Activated CD4-positive, alpha-beta T cell treated with anti-CD3 and anti-CD28 coated beads for 36 hours (primary cell): ENCODE measurements at regions of chr18 and their contacts with region 1.

Region 1: DNA sequence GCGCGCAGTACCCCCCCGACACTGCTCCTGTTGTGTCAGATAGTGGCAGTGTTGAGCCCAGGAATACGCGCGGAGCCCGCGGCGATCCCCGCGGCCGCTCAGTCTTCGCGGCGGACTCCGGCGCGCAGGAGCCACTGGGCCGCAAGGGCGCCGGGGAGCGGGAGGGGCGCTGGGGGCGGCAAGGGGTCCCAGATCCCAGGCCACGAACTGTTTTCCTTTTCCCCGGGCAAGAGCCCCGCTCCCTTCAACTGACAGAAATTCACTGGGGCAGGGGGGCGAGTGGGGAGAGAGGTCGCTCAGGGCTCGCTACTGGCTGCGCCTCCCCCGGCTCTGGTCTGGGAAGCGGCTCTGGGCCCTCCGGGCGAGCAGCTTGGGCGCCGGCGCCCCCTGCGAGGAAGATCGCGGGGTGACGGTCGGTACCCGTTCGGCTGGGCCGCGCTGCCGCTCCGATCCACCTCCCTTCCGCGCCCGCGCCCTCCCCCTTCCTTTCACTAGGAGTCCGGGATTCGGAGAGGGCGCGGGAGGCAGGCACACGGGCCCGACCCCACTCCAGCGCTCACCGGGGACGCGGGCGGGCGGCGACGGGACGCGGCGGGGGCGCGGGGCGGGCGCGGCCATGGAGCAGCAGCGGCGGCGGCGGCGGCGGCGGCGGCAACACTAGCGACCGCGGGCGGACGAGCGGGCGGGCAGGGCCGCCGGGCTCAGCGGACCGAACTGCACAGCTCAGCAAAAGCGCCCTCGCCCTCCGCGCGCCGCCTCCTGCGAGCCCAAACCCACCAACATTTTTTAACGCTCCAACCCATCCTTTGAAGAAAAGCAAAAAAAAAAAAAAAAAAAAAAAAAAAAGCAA is 1.4 kb upstream of the SETBP1 start:
- DNase-seq: peak; percentile 88
- ATAC-seq: peak; percentile 94
- H3K4me3 Mint-ChIP-seq: no peak overlapping the region
- H3K27ac Mint-ChIP-seq: no peak overlapping the region
- H3K4me1 Mint-ChIP-seq: peaks cover 7% of the 10 kb centered on the region
- H3K27me3 Mint-ChIP-seq: peaks cover 38% of the 10 kb centered on the region

Region 2: DNA sequence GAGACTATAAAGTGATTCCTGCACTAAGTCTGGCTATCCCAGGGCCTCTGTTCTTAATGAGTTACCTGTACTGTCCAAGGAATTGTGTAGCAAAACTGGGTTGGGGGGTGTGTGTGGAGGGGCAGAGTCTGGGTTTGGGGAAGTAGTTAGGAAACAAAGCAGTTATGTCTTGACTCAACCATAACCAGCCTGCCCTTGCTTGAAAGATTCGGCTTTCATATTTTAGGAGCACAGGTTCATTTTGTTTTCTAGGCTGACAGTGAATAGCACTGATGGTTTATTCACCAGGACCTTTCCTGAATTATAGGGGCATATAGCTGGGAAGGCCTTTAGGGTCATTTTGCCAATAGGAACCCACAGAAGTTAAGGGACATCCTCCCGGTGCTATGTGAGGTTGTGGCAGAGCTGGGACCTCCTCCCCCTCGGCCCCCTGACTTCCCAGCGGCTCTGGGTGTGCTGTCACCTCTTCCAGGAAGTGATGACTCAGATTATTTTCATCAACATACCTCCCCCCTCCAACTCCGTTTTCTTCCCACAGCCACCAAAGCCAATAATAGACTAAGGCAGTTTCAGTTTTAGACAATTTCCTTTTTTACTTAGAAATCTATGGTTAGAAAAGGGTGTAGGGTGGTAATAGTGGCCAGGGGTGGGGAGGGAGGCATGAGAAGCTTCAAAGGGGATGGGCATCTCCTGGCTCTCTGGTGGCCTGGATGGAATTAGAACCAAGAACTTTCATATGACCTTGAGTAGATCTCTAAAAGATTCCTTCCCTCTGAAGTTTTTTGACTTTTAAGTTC is 46.2 kb after region 1 on chr18:
- CTCF ChIA-PET with region 1: no interaction called
- POLR2A ChIA-PET with region 1: no interaction called
- intact Hi-C with region 1: loop called (anchors 1 to 2 kb)
- DNase-seq: peak; percentile 81
- ATAC-seq: peak; percentile 78
- H3K4me3 Mint-ChIP-seq: peak overlapping the region; percentile 17
- H3K27ac Mint-ChIP-seq: peak overlapping the region; percentile 80
- H3K4me1 Mint-ChIP-seq: peaks cover 80% of the 10 kb centered on the region
- H3K27me3 Mint-ChIP-seq: peaks cover 2% of the 10 kb centered on the region

Region 3: GRCh38 chr18:44819944-44820510 is 140.7 kb after region 1 on chr18:
- CTCF ChIA-PET with region 1: no interaction called
- POLR2A ChIA-PET with region 1: no interaction called
- intact Hi-C with region 1: loop called (anchors 1 to 10 kb)
- DNase-seq: no peak
- ATAC-seq: no peak
- H3K4me3 Mint-ChIP-seq: no peak overlapping the region
- H3K27ac Mint-ChIP-seq: no peak overlapping the region
- H3K4me1 Mint-ChIP-seq: peaks cover 28% of the 10 kb centered on the region
- H3K27me3 Mint-ChIP-seq: peaks cover 23% of the 10 kb centered on the region

Region 4: DNA sequence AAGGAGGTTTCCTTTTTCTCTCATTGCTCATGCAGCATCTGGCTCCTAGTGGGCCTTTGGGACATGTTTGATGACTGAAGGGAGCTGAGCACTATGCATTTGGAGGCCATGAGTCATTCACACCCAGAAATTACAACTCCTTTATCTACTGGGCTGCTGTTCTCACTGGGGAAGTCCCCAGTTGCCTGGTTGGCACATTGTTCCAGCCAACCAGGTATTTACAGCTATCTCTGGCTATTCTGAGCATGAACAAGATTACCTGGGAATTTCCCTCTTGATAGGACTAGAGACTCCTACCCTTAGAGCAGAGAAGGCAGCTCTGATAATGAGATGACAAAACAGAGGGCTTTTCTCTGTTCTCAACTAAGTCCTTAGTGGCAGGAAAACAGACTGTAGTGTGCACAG is 207.9 kb after region 1 on chr18:
- CTCF ChIA-PET with region 1: interaction called, 4 read pairs
- POLR2A ChIA-PET with region 1: no interaction called
- intact Hi-C with region 1: loop called (anchors 1 to 2 kb)
- DNase-seq: peak; percentile 74
- ATAC-seq: peak; percentile 98
- H3K4me3 Mint-ChIP-seq: peak overlapping the region; percentile 11
- H3K27ac Mint-ChIP-seq: peak overlapping the region; percentile 96
- H3K4me1 Mint-ChIP-seq: peaks cover 30% of the 10 kb centered on the region
- H3K27me3 Mint-ChIP-seq: peaks cover 3% of the 10 kb centered on the region

Region 5: GRCh38 chr18:44973282-44973681 is 294.0 kb after region 1 on chr18:
- CTCF ChIA-PET with region 1: no interaction called
- POLR2A ChIA-PET with region 1: no interaction called
- intact Hi-C with region 1: loop called (anchors 10 kb)
- DNase-seq: peak; percentile 23
- ATAC-seq: no peak
- H3K4me3 Mint-ChIP-seq: no peak overlapping the region
- H3K27ac Mint-ChIP-seq: peak overlapping the region; percentile 56
- H3K4me1 Mint-ChIP-seq: no peaks in the 10 kb centered on the region
- H3K27me3 Mint-ChIP-seq: peaks cover 2% of the 10 kb centered on the region

Region 6: GRCh38 chr18:45103319-45104048 is 424.2 kb after region 1 on chr18:
- CTCF ChIA-PET with region 1: no interaction called
- POLR2A ChIA-PET with region 1: no interaction called
- intact Hi-C with region 1: no loop called
- DNase-seq: no peak
- ATAC-seq: no peak
- H3K4me3 Mint-ChIP-seq: no peak overlapping the region
- H3K27ac Mint-ChIP-seq: no peak overlapping the region
- H3K4me1 Mint-ChIP-seq: no peaks in the 10 kb centered on the region
- H3K27me3 Mint-ChIP-seq: no peaks in the 10 kb centered on the region

Region 7: DNA sequence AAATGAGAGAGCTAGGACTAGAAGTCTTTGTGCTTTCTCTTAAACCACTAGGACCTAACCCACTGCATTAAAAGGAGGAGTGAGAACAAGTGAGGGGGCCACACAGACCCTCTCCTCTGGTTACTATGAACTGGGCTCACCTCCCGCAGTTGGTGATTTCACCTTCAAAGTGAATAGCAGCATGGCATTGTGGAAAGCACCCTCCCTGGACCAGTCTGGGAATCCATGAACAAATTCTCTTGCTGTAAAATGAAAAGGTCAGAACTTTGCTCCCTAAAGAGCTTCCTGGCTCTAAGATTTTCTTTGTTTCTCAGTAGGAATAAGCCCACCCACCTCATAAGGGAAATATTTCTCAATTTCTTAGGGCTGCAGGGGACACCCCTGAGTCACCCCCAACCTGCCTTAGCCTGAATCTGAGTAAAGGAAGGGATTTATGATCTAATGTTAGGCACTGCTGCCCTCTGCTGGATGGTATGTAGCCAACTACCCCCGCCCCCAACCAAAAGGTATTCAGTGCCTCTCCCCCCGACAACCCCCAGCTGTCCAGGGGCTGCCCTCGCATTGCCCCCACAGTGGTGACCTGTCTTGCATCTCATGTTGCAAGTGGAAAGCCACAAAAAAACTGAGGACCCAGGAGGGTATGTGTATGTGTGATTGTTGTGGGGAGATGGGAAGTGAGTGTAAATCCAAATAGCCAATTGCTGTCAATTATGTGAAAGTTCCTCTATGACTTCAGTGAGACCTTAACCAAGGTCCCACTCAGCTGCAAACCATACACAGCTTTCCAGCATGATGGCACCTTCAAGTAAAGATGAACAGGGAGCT is 705.1 kb after region 1 on chr18:
- CTCF ChIA-PET with region 1: no interaction called
- POLR2A ChIA-PET with region 1: no interaction called
- intact Hi-C with region 1: loop called in 1 of 2 experiments (anchors 10 kb)
- DNase-seq: peak; percentile 72
- ATAC-seq: peak; percentile 66
- H3K4me3 Mint-ChIP-seq: no peak overlapping the region
- H3K27ac Mint-ChIP-seq: no peak overlapping the region
- H3K4me1 Mint-ChIP-seq: peaks cover 3% of the 10 kb centered on the region
- H3K27me3 Mint-ChIP-seq: peaks cover 26% of the 10 kb centered on the region